GM12878 (cell line): ENCODE measurements at regions of chr17 and their contacts with region 1.

Region 1: GRCh38 chr17:63611354-63611753 is 10.7 kb downstream of the TACO1 start:
- DNase-seq: no peak
- ATAC-seq: peak; percentile 55
- H3K4me3 ChIP-seq: no peak overlapping the region
- H3K27ac ChIP-seq: no peak overlapping the region
- H3K4me1 ChIP-seq: no peaks in the 10 kb centered on the region
- H3K27me3 ChIP-seq: no peaks in the 10 kb centered on the region
- CTCF ChIP-seq: no peak
- EP300 ChIP-seq: no peak
- POLR2A ChIP-seq: no peak
- RAD21 ChIP-seq: no peak

Region 2: GRCh38 chr17:63425482-63425881 is 185.9 kb before region 1 on chr17:
- CTCF ChIA-PET with region 1: interaction called, 162 read pairs
- POLR2A ChIA-PET with region 1: interaction called, 6 read pairs
- RAD21 ChIA-PET with region 1: interaction called, 42 read pairs
- SMC1A ChIA-PET with region 1: interaction called, 82 read pairs
- in situ Hi-C with region 1: loop called (anchors 5 kb)
- intact Hi-C with region 1: loop called (anchors 1 kb)
- DNase-seq: peak; percentile 39
- ATAC-seq: peak; percentile 95
- H3K4me3 ChIP-seq: no peak overlapping the region
- H3K27ac ChIP-seq: no peak overlapping the region
- H3K4me1 ChIP-seq: no peaks in the 10 kb centered on the region
- H3K27me3 ChIP-seq: no peaks in the 10 kb centered on the region; a peak in 1 of 4 replicates
- CTCF ChIP-seq: peak; percentile 90 to 97 (median 90)
- EP300 ChIP-seq: no peak
- POLR2A ChIP-seq: no peak
- RAD21 ChIP-seq: peak; percentile 98

Region 3: DNA sequence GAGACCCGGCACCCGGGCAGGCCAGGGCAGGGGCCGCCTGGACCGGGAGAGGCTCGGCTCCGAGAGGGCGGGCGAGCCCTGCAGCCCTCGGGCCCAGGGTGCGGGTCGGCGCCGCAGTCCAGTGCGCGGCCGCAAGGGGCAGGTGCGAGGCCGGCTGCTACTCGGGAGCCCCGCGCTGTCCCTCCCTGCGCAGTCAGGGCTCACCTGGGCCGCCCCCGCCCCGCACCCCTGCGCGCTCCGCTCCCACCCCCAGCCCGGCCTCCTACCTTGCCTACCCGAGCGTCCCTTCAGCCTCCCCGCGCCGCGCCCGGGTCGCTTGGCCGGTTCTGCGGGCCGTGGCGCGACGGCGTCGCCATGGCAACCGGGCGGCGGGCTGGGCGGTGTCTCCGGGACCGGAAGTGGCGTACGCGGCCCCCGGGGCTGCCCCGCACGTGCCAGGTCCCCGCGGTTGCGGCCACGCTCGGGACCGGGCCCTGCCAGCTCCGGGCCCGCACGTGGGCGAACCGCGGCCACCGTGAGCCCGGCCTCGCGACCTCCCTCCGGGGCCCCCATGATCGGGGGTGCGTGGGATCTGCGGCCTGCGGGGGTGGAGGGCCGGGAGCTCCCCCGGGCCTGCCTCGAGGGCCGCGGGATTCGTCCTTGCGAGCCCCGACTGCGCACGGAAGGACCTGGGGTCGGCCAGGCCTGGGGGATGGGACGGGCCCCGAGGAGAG is 165.2 kb before region 1 on chr17 and contains the start of gene CYB561:
- CTCF ChIA-PET with region 1: interaction called, 43 read pairs
- POLR2A ChIA-PET with region 1: no interaction called
- RAD21 ChIA-PET with region 1: interaction called, 9 read pairs
- SMC1A ChIA-PET with region 1: interaction called, 14 read pairs
- in situ Hi-C with region 1: no loop called
- intact Hi-C with region 1: no loop called
- DNase-seq: no peak
- ATAC-seq: peak; percentile 87
- H3K4me3 ChIP-seq: peak within 1 kb of the TSS; percentile 80
- H3K27ac ChIP-seq: peak within 1 kb of the TSS; percentile 64; the same call in 1 of the 2 replicates
- H3K4me1 ChIP-seq: peaks cover 14% of the 10 kb centered on the region
- H3K27me3 ChIP-seq: no peaks in the 10 kb centered on the region
- CTCF ChIP-seq: peak; percentile 24 to 50 (median 28); a peak in 2 of 6 replicates
- EP300 ChIP-seq: no peak
- POLR2A ChIP-seq: 0 out of 2 replicates have a peak, but pooled peaks have one; percentile 4
- RAD21 ChIP-seq: no peak
- polyA plus RNA-seq, gene CYB561: 0.52 to 0.93 TPM

Region 4: DNA sequence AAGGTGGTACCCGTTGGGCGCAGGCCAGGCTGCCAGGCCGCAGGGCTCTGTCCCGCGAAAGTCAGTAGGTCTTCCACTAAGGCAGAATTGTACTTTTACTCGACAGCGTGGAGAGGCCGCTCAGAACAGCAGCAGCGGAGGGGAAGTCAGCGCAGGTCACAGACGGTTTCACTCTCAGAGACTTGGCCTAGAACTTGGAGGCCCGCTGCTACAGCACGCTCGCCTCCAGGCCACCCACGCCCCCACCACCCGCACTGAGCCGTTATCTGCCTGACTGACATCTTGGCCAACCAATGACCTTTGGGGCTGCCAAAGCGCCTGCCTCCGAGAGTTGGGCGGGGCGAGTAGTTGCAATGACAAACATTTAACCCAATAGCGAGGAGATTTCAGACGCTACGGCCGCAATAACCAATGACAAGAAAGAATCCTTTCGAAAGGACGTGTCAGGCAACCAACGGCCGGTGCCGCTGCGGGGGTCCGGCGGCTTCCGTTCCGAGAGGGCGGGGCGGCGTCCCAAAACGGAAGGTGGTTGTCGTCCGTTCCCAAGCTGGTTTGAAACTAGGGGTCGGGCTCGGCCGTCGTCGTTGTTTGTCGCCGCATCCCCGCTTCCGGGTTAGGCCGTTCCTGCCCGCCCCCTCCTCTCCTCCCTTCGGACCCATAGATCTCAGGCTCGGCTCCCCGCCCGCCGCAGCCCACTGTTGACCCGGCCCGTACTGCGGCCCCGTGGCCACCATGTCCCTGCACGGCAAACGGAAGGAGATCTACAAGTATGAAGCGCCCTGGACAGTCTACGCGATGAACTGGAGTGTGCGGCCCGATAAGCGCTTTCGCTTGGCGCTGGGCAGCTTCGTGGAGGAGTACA is 61.2 kb before region 1 on chr17 and contains the start of gene DCAF7:
- CTCF ChIA-PET with region 1: interaction called, 17 read pairs
- POLR2A ChIA-PET with region 1: interaction called, 3 read pairs
- RAD21 ChIA-PET with region 1: interaction called, 6 read pairs
- SMC1A ChIA-PET with region 1: interaction called, 10 read pairs
- in situ Hi-C with region 1: no loop called
- intact Hi-C with region 1: no loop called
- DNase-seq: peak; percentile 99
- ATAC-seq: peak; percentile 94
- H3K4me3 ChIP-seq: peak within 1 kb of the TSS; percentile 99
- H3K27ac ChIP-seq: peak within 1 kb of the TSS; percentile 96
- H3K4me1 ChIP-seq: peaks cover 15% of the 10 kb centered on the region
- H3K27me3 ChIP-seq: no peaks in the 10 kb centered on the region
- CTCF ChIP-seq: no peak
- EP300 ChIP-seq: 0 out of 4 replicates have a peak, but pooled peaks of 1 of the 2 experiments have one; percentile 23
- POLR2A ChIP-seq: peak; percentile 86
- RAD21 ChIP-seq: no peak
- polyA plus RNA-seq, gene DCAF7: 27.0 to 27.4 TPM

Region 5: DNA sequence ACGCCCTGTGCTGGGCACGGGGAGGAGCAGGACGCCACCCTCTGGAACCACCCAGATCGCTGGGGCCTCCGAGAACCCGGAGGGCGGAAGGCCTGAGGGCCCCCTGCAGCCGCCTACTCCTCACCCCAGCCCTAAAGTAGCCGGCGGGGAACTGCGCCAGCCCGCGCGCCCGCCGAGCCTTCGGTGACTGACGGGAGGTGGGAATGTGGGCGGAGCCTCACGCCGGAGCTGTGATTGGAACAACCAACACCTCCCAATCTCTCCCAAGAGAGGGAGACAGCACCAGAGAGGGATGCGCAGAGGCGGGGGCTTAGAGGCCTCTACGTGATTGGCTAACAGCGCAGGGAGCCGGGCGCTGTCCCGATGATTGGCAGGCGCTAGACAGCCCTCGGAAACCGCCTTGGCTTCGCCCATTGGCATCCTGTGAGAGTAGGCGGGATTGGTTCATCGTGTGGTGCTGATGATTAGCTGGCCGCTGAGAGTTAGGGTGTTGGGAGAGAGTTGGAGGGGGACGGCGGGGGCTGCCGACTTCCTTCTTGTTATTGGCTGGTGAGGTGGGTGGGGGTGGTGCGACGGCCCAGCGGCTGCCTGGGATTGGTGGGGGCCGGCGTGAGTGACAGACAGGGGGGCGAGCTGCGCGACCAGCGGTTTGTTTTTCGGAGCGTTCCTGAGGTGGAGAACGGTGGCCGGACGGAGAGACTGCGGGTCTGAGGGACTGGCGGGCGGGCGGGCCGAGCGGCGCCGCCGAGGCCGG is 10.6 kb after region 1 on chr17 and contains the start of gene MAP3K3:
- CTCF ChIA-PET with region 1: interaction called, 24 read pairs
- POLR2A ChIA-PET with region 1: interaction called, 3 read pairs
- RAD21 ChIA-PET with region 1: interaction called, 6 read pairs
- SMC1A ChIA-PET with region 1: interaction called, 11 read pairs
- in situ Hi-C with region 1: no loop called
- intact Hi-C with region 1: no loop called
- DNase-seq: peak; percentile 99
- ATAC-seq: peak; percentile 94
- H3K4me3 ChIP-seq: peak within 1 kb of the TSS; percentile 99
- H3K27ac ChIP-seq: peak within 1 kb of the TSS; percentile 67
- H3K4me1 ChIP-seq: peaks cover 5% of the 10 kb centered on the region; the same call in 1 of the 2 replicates
- H3K27me3 ChIP-seq: no peaks in the 10 kb centered on the region
- CTCF ChIP-seq: 0 out of 6 replicates have a peak, but pooled peaks of 1 of the 3 experiments have one; percentile 17
- EP300 ChIP-seq: no peak
- POLR2A ChIP-seq: peak; percentile 92
- RAD21 ChIP-seq: no peak
- polyA plus RNA-seq, gene MAP3K3: 1.6 to 2.0 TPM